ENCODE measurements at regions of chr11 and their contacts with region 1.

Region 1: GRCh38 chr11:106076919-106077608 is at the start of gene KBTBD3:
- DNase-seq: peak; percentile 97 to 100
- ATAC-seq: peak; percentile 87 to 97 (median 88)
- H3K4me3 ChIP-seq: peak within 1 kb of the TSS; percentile 88
- H3K4me3 Mint-ChIP-seq: peak within 1 kb of the TSS; percentile 97
- H3K27ac ChIP-seq: peak within 1 kb of the TSS; percentile 95
- H3K27ac Mint-ChIP-seq: peak within 1 kb of the TSS; percentile 96
- H3K4me1 ChIP-seq: peaks cover 11% of the 10 kb centered on the region
- H3K4me1 Mint-ChIP-seq: peaks cover 45 to 53% of the 10 kb centered on the region in 2 donors
- H3K27me3 ChIP-seq: no peaks in the 10 kb centered on the region
- H3K27me3 Mint-ChIP-seq: no peaks in the 10 kb centered on the region
- CTCF ChIP-seq: peak; percentile 19
- total RNA-seq, gene KBTBD3: 9.0 to 12.7 (median 9.9) TPM

Region 2: DNA sequence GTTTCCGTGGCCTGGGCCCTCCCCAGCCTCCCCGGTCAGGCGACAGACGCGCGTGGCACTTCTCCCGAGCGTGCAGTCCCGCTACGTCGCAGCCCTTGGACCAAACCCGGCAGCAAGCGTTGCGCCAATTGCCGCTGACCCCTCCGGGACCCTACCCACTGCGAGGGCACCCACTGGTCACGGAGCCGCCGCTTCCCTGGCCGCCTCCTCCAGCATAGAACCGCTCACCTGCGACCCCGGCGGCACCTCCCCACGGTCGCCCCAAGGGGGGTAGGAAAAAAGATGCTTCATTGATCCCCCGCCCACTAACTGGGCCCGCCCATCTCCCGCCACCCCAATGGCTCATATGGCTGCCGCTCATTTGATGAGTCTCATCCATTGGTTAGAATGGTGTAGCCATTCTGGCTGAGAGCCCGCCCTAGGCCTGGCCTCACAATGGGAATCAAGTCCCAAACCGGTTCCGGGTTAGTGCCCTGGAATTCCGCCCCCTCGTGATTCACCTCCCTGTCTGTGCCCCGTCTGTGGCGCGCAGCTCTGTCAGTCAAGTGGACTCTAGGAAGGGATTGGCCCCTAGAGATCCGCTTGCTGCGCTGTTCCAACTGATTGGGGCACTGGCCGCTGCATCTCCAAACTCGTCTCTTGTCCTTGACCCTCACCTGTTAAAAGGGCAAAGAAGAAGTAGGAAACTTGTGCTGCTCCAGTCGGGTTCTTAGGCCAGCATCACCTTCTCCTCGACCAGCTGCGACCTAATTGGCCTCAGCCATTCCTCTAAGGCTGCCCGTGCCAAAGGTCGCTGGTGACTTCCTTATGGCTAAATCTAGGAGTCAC is 54.9 kb before region 1 on chr11 and contains the start of gene MSANTD4:
- intact Hi-C with region 1: loop called (anchors 1 kb)
- DNase-seq: peak; percentile 96 to 98
- ATAC-seq: peak; percentile 94 to 99 (median 95)
- H3K4me3 ChIP-seq: peak within 1 kb of the TSS; percentile 95
- H3K4me3 Mint-ChIP-seq: peak within 1 kb of the TSS; percentile 97
- H3K27ac ChIP-seq: peak within 1 kb of the TSS; percentile 73
- H3K27ac Mint-ChIP-seq: peak within 1 kb of the TSS; percentile 89 to 99
- H3K4me1 ChIP-seq: peaks cover 7% of the 10 kb centered on the region
- H3K4me1 Mint-ChIP-seq: peaks cover 44 to 50% of the 10 kb centered on the region in 2 donors
- H3K27me3 ChIP-seq: no peaks in the 10 kb centered on the region
- H3K27me3 Mint-ChIP-seq: peaks cover 16 to 22% of the 10 kb centered on the region in 2 donors
- CTCF ChIP-seq: no peak
- total RNA-seq, gene MSANTD4: 5.1 to 8.7 (median 7.2) TPM